Activated T-helper 2 cell treated with anti-CD3 and anti-CD28 coated beads, Interferon-gamma antibody, Interleukin-2, Interleukin-4, amounts not matched to agents 10 μg/mL and 5 μg/mL and 100 μg/mL, durations not matched to agents 14 hours and 24 hours and 36 hours (primary cell): ENCODE measurements at regions of chrX and their contacts with region 1.

Region 1: GRCh38 chrX:48696301-48697181 is at the start of gene SUV39H1:
- DNase-seq: peak; percentile 84
- H3K4me3 Mint-ChIP-seq: peak within 1 kb of the TSS; percentile 94
- H3K27ac Mint-ChIP-seq: peak within 1 kb of the TSS; percentile 94
- H3K4me1 Mint-ChIP-seq: peaks cover 26% of the 10 kb centered on the region
- H3K27me3 Mint-ChIP-seq: no peaks in the 10 kb centered on the region
- total RNA-seq, gene SUV39H1: 28.8 and 29.6 TPM in 2 replicates

Region 2: DNA sequence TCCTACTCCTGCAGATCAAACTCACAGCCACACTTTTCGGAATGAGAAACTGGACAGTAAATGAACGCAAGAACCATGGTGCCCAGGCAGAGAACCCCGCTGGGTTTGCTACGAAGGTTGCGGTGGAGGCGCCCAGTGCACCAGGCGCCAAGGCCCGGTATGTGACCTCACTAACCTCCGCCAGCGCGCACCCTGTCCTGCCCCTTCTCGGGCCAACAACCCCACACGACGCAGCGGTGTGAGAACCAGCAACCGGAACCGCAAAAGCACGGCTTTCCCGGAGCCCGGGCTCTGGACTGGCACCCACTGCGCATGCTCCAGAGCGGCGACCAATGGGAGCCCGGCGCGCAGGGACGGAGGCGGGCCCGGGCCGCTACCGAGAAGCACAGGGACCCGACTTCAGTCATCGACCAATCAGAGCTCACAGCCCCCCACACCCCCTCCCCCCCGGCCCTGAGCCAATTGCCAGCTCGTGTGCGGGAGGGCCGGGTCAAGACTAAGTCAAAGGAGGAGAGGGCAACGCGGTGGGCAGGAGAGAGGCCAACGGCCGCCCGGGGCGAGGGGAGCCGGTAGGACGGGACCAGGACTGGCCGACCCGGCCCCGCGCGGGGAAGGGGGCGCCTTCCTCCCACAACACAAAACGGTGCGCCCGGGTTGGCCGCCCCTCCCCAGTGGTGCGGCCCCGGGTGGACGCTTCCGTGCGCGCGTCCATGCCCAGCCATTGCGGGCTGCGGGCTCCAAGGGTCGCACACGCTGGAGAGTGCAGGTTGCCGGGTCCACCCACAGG is 20.2 kb before region 1 on chrX:
- intact Hi-C with region 1: loop called (anchors 2 kb)
- DNase-seq: peak; percentile 86
- H3K4me3 Mint-ChIP-seq: peak overlapping the region; percentile 91
- H3K27ac Mint-ChIP-seq: peak overlapping the region; percentile 91
- H3K4me1 Mint-ChIP-seq: peaks cover 13% of the 10 kb centered on the region
- H3K27me3 Mint-ChIP-seq: no peaks in the 10 kb centered on the region

Region 3: DNA sequence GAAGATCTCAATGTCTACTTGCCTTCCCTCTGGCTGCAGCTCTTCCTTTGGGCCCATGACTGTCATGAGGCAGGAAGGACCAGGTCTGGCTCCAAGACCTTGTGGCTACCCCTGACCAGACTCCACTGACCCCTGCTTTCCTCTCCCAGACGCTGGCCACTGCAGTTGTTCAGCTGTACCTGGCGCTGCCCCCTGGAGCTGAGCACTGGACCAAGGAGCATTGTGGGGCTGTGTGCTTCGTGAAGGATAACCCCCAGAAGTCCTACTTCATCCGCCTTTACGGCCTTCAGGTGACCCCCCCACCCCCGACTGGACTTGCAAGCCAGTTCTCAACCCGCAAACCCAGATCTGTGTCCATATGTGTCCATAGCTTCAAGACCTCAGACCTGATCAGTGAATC is 12.4 kb before region 1 on chrX:
- intact Hi-C with region 1: loop called (anchors 1 kb)
- DNase-seq: no peak
- H3K4me3 Mint-ChIP-seq: peak overlapping the region; percentile 99
- H3K27ac Mint-ChIP-seq: peak overlapping the region; percentile 96
- H3K4me1 Mint-ChIP-seq: peaks cover 36% of the 10 kb centered on the region
- H3K27me3 Mint-ChIP-seq: no peaks in the 10 kb centered on the region